A673 (cell line): ENCODE measurements at regions of chr5 and their contacts with region 1.

Region 1: DNA sequence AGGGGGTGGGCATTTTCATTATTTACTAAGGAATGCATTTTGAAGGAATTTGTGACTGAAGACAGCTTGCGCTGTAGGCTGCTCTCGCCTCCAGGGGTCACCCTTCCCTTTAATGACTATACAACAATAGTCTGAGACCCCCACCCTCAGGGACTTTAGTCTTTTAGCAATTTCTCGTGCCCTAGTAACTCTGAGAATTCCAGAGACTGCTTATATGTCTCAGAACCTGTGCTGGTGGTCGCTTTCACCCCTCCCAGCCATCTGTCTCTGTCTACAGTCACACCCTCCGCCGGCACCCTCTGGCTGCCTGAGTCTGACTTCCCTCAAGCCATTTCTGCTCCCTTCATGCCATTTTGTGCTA is 671.4 kb downstream of the NR2F1-AS1 start:
- DNase-seq: peak; percentile 31
- H3K4me3 ChIP-seq: no peak overlapping the region
- H3K27ac ChIP-seq: no peak overlapping the region
- H3K4me1 ChIP-seq: no peaks in the 10 kb centered on the region
- H3K27me3 ChIP-seq: no peaks in the 10 kb centered on the region
- CTCF ChIP-seq: peak; percentile 70

Region 2: DNA sequence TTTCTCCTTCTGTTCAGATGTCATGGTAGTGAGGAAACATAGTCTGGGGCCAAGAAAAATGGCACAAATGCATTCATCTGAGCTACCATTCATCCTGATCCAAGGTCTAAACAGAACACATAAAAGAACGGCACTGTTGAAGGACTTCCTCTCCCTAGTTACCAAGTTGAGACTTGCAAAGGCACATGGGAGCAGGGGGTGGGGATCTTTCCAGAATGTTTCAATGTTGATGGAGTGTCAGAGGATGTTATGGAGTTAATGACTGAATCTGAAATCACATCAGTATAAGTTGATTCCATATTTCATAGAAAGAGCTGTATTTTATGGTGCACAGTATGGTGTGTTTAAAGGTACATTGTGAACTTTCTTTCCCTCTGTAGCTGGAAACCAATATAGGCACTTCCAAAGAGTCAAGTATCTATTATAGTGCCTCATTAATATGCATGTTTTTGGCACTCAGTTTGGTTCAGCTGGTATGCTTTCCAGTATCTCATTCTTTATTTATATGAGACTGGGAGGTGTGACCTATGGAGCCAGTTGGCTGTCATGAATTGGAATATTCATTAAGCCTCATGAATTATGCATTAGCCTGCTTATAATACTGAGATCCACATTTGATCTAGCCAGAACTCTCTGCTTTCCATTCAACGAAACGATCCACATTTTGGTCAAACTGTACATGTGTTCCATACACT is 68.4 kb after region 1 on chr5:
- CTCF ChIA-PET with region 1: no interaction called
- POLR2A ChIA-PET with region 1: no interaction called
- intact Hi-C with region 1: no loop called
- DNase-seq: peak; percentile 25
- H3K4me3 ChIP-seq: no peak overlapping the region
- H3K27ac ChIP-seq: no peak overlapping the region
- H3K4me1 ChIP-seq: no peaks in the 10 kb centered on the region
- H3K27me3 ChIP-seq: no peaks in the 10 kb centered on the region
- CTCF ChIP-seq: no peak

Region 3: DNA sequence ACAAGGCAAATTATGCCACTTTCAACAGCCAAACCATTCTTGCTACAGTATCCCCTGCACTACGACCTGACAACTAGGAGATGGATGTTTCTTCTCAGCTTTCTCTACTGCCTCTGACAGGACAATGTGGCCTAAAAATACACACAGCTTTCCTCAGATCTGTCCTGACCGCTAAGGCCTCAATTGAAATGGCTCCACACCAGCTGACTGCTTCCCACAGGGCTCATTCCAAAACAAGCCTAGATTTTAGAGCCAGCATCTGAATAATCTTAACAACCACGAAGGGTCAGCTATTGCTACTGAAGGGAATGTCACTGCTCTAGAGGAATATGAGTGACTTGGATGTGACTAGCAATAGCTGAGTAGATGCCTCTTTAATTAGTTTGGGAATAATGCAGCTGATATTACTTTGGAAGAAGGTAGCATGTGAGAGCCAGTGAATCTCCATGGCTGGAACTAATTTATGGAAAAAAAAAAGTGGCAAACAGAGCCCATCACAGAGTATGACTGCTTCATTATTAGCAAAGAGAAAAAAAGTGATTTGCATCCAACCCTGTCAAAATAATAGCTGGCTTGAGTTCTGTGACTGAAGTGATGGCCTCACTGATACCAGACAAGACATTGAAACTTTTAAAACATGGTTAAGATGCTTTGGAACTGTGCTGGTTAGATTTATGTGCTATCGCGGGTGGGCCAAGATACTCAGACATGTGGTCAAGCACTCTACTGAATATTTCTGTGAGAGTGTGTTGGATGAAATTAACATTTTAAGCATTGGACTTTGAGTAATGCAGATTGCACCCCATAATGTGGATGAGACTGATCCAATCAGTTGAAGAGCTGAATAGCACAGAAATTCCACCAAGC is 221.3 kb after region 1 on chr5:
- CTCF ChIA-PET with region 1: no interaction called
- POLR2A ChIA-PET with region 1: no interaction called
- intact Hi-C with region 1: no loop called
- DNase-seq: no peak
- H3K4me3 ChIP-seq: no peak overlapping the region
- H3K27ac ChIP-seq: no peak overlapping the region
- H3K4me1 ChIP-seq: no peaks in the 10 kb centered on the region
- H3K27me3 ChIP-seq: no peaks in the 10 kb centered on the region
- CTCF ChIP-seq: no peak

Region 4: GRCh38 chr5:93570294-93571113 is 660.9 kb after region 1 on chr5:
- CTCF ChIA-PET with region 1: no interaction called
- POLR2A ChIA-PET with region 1: no interaction called
- intact Hi-C with region 1: loop called (anchors 5 kb)
- DNase-seq: no peak
- H3K4me3 ChIP-seq: no peak overlapping the region
- H3K27ac ChIP-seq: no peak overlapping the region
- H3K4me1 ChIP-seq: no peaks in the 10 kb centered on the region
- H3K27me3 ChIP-seq: peaks cover 42% of the 10 kb centered on the region
- CTCF ChIP-seq: no peak

Region 5: DNA sequence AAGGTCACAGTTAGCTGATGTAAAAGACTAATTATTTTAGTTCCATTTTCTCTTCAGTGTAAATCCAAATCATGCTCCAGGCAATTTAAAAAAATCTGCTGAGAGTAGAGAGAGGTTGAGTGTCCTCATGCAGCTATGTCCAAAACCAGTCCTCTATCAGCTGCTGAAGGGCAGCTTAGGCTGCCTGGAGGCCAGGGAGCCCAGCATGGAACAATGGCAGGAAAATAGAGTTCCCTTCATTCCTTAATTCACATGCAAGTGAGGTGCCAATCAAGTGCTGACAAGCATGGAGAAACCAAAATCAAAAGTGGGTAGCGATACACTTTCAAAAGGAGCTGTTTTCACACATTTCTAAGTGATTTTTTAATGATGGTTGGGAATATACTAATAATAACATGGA is 910.1 kb after region 1 on chr5:
- CTCF ChIA-PET with region 1: no interaction called
- POLR2A ChIA-PET with region 1: no interaction called
- intact Hi-C with region 1: loop called (anchors 10 kb)
- DNase-seq: no peak
- H3K4me3 ChIP-seq: no peak overlapping the region
- H3K27ac ChIP-seq: no peak overlapping the region
- H3K4me1 ChIP-seq: no peaks in the 10 kb centered on the region
- H3K27me3 ChIP-seq: no peaks in the 10 kb centered on the region
- CTCF ChIP-seq: no peak

Region 6: DNA sequence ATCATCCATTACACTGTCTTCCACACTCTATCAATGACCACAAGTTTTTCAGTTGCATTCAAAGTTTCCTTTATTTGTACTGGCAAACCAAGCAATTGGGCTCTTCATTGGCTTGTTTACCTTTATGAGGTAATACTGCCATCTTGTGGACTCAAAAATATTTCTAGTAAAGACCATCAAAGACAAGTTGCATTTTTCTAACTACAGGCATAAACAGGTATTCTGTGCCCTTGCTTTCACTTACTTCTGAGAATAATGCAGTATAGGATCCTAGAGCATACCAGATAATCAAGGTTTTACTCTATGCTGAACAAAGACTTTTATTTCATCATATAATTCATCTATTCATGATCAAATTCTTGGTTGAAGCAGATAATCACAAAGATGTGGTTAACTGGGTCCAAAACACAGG is 1005.6 kb after region 1 on chr5:
- CTCF ChIA-PET with region 1: no interaction called
- POLR2A ChIA-PET with region 1: no interaction called
- intact Hi-C with region 1: loop called (anchors 10 kb)
- DNase-seq: peak; percentile 71
- H3K4me3 ChIP-seq: no peak overlapping the region
- H3K27ac ChIP-seq: no peak overlapping the region
- H3K4me1 ChIP-seq: no peaks in the 10 kb centered on the region
- H3K27me3 ChIP-seq: no peaks in the 10 kb centered on the region
- CTCF ChIP-seq: peak; percentile 64